Naive thymus-derived CD4-positive, alpha-beta T cell (primary cell): ENCODE measurements at regions of chrX and their contacts with region 1.

Region 1: GRCh38 chrX:13078739-13079444 is 34.5 kb upstream of the FAM9C start:
- DNase-seq: no peak
- ATAC-seq: no peak
- H3K4me3 ChIP-seq: peak overlapping the region; percentile 54
- H3K4me3 Mint-ChIP-seq: peak overlapping the region; percentile 59 to 79 (median 74)
- H3K27ac ChIP-seq: peak overlapping the region; percentile 88
- H3K27ac Mint-ChIP-seq: peak overlapping the region; percentile 90 to 99 (median 95)
- H3K4me1 ChIP-seq: peaks cover 55 to 92% of the 10 kb centered on the region in 2 donors
- H3K4me1 Mint-ChIP-seq: peaks cover 42 to 98% (median 89%) of the 10 kb centered on the region in 7 donors
- H3K27me3 ChIP-seq: no peaks in the 10 kb centered on the region
- H3K27me3 Mint-ChIP-seq: no peaks in the 10 kb centered on the region

Region 2: DNA sequence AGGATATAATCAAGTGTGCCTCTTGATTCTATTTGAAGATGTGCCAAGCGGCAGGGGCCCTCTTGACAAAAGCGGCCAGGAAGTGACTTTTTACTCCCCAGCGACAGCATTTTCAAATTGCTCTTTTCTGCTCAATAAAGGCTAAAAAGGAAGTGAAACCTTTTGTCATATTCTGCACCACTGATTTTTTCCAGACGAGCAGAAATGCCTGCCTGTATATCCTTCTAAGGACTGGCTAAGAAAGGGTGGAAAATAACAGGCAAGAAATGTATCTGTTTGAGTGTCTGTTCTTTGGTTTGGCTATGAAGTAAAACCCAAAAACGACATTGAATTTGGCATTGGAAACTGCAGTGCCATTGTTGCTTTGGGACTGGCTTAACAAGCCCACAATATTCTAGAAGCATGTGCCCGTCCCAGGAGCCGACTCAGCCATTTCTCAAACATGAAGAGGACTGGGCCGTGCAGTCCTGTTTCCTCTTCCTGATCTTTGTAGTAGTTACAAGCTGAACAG is 78.5 kb before region 1 on chrX:
- CTCF ChIA-PET with region 1: interaction called, 6 read pairs
- POLR2A ChIA-PET with region 1: interaction called, 434 read pairs
- intact Hi-C with region 1: loop called (anchors 2 to 5 kb)
- DNase-seq: peak in 7 of 9 donors; percentile 46 to 74 (median 68)
- ATAC-seq: peak; percentile 65
- H3K4me3 ChIP-seq: peak overlapping the region; percentile 42
- H3K4me3 Mint-ChIP-seq: peak overlapping the region; percentile 70 to 86 (median 84)
- H3K27ac ChIP-seq: peak overlapping the region; percentile 77
- H3K27ac Mint-ChIP-seq: peak overlapping the region; percentile 83 to 98 (median 95)
- H3K4me1 ChIP-seq: peaks cover 66 to 68% of the 10 kb centered on the region in 2 donors
- H3K4me1 Mint-ChIP-seq: peaks cover 27 to 88% (median 74%) of the 10 kb centered on the region in 7 donors
- H3K27me3 ChIP-seq: no peaks in the 10 kb centered on the region
- H3K27me3 Mint-ChIP-seq: no peaks in the 10 kb centered on the region

Region 3: GRCh38 chrX:13005661-13006473 is 73.0 kb before region 1 on chrX:
- CTCF ChIA-PET with region 1: interaction called, 6 read pairs
- POLR2A ChIA-PET with region 1: interaction called, 434 read pairs
- intact Hi-C with region 1: loop called (anchors 2 to 5 kb)
- DNase-seq: peak in 4 of 9 donors; percentile 17 to 39 (median 30)
- ATAC-seq: peak; percentile 61
- H3K4me3 ChIP-seq: no peak overlapping the region
- H3K4me3 Mint-ChIP-seq: peak overlapping the region; percentile 61 to 88 (median 72)
- H3K27ac ChIP-seq: peak overlapping the region; percentile 58
- H3K27ac Mint-ChIP-seq: peak overlapping the region; percentile 86 to 100 (median 95)
- H3K4me1 ChIP-seq: peaks cover 37 to 61% of the 10 kb centered on the region in 2 donors
- H3K4me1 Mint-ChIP-seq: peaks cover 33 to 83% (median 55%) of the 10 kb centered on the region in 7 donors
- H3K27me3 ChIP-seq: no peaks in the 10 kb centered on the region
- H3K27me3 Mint-ChIP-seq: no peaks in the 10 kb centered on the region

Region 4: GRCh38 chrX:13046141-13046855 is 32.6 kb before region 1 on chrX:
- CTCF ChIA-PET with region 1: interaction called, 14 read pairs
- POLR2A ChIA-PET with region 1: interaction called, 353 read pairs
- intact Hi-C with region 1: no loop called
- DNase-seq: no peak
- ATAC-seq: no peak
- H3K4me3 ChIP-seq: no peak overlapping the region
- H3K4me3 Mint-ChIP-seq: peak overlapping the region in 5 of 10 donors; percentile 3 to 58 (median 23)
- H3K27ac ChIP-seq: no peak overlapping the region
- H3K27ac Mint-ChIP-seq: peak overlapping the region in 8 of 9 donors; percentile 20 to 89 (median 60)
- H3K4me1 ChIP-seq: peaks cover 20 to 60% of the 10 kb centered on the region in 2 donors
- H3K4me1 Mint-ChIP-seq: peaks cover 6 to 71% (median 61%) of the 10 kb centered on the region in 7 donors
- H3K27me3 ChIP-seq: no peaks in the 10 kb centered on the region
- H3K27me3 Mint-ChIP-seq: no peaks in the 10 kb centered on the region

Region 5: DNA sequence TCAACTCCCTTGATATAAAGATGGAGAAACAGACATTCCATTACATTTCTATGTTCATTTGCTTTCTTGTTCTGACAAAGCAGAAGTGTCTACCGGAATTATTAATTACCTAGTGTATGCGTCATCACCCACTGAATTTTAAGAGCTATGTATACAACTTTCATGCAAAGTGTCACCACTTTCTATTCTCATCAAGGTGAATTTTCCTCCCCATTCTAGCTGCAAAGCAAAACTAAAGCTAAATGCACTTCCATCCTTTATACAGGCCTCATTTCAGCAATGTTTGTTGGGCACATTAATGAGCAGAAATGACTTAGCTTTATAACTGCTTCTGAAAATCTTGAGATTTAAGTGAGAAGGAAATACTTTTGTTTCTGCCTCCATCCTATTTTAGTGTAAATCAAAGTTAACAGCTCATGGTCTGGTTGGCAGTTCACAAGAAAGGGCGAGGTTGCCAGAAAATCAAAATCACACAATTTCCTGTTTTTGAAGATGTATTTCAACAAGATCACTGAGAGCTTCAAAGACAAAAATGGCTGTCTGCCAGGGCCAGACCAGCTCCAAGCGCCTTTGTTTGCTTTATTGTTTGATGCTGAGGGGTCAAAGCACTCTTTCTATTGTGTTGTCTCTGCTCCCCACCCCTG is 27.2 kb before region 1 on chrX:
- CTCF ChIA-PET with region 1: interaction called, 14 read pairs
- POLR2A ChIA-PET with region 1: interaction called, 353 read pairs
- intact Hi-C with region 1: loop called in 1 of 2 experiments (anchors 1 kb)
- DNase-seq: peak in 7 of 9 donors; percentile 69 to 87 (median 79)
- ATAC-seq: peak; percentile 84
- H3K4me3 ChIP-seq: peak overlapping the region; percentile 25
- H3K4me3 Mint-ChIP-seq: peak overlapping the region; percentile 46 to 80 (median 58)
- H3K27ac ChIP-seq: peak overlapping the region; percentile 74
- H3K27ac Mint-ChIP-seq: peak overlapping the region; percentile 93 to 96 (median 95)
- H3K4me1 ChIP-seq: peaks cover 39 to 85% of the 10 kb centered on the region in 2 donors
- H3K4me1 Mint-ChIP-seq: peaks cover 14 to 93% (median 81%) of the 10 kb centered on the region in 7 donors
- H3K27me3 ChIP-seq: no peaks in the 10 kb centered on the region
- H3K27me3 Mint-ChIP-seq: no peaks in the 10 kb centered on the region

Region 6: GRCh38 chrX:13064599-13065143 is 14.2 kb before region 1 on chrX:
- CTCF ChIA-PET with region 1: interaction called, 3 read pairs
- POLR2A ChIA-PET with region 1: interaction called, 16 read pairs
- intact Hi-C with region 1: no loop called
- DNase-seq: no peak
- ATAC-seq: no peak
- H3K4me3 ChIP-seq: no peak overlapping the region
- H3K4me3 Mint-ChIP-seq: peak overlapping the region in 1 of 10 donors; percentile 27
- H3K27ac ChIP-seq: no peak overlapping the region
- H3K27ac Mint-ChIP-seq: peak overlapping the region in 3 of 9 donors; percentile 53 to 55 (median 54)
- H3K4me1 ChIP-seq: peaks cover 0 to 12% of the 10 kb centered on the region in 2 donors
- H3K4me1 Mint-ChIP-seq: peaks cover 13 to 55% (median 43%) of the 10 kb centered on the region in 7 donors
- H3K27me3 ChIP-seq: no peaks in the 10 kb centered on the region
- H3K27me3 Mint-ChIP-seq: no peaks in the 10 kb centered on the region